Esophagus muscularis mucosa (tissue), 4 donors: ENCODE measurements at regions of chr10 and their contacts with region 1.

Region 1: DNA sequence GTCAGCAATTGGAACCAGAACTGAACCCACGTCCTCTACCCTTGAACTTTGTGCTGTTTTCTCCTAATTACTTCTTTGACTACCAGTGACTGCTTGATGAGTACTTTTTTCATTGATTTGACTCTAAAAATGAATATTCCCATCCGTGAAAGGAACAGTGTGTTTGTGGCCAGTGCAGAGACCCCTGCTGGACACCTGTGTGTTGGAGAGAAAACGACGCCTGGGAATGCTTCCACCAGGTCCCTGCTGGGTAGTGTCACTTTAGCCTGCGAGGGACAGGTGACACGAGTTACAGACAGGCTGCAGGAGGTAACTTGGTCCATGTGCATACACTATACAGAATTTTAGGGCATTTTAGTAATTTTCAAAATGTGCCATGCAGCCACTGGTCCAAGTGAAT is 6.8 kb upstream of the GJD4 start:
- DNase-seq: no peak
- H3K4me3 ChIP-seq: no peak overlapping the region
- H3K27ac ChIP-seq: no peak overlapping the region
- H3K4me1 ChIP-seq: no peaks in the 10 kb centered on the region
- H3K27me3 ChIP-seq: peaks cover 0 to 21% (median 0%) of the 10 kb centered on the region in 4 donors
- CTCF ChIP-seq: peak in 1 of 3 experiments; percentile 40
- EP300 ChIP-seq: no peak
- POLR2A ChIP-seq: no peak

Region 2: DNA sequence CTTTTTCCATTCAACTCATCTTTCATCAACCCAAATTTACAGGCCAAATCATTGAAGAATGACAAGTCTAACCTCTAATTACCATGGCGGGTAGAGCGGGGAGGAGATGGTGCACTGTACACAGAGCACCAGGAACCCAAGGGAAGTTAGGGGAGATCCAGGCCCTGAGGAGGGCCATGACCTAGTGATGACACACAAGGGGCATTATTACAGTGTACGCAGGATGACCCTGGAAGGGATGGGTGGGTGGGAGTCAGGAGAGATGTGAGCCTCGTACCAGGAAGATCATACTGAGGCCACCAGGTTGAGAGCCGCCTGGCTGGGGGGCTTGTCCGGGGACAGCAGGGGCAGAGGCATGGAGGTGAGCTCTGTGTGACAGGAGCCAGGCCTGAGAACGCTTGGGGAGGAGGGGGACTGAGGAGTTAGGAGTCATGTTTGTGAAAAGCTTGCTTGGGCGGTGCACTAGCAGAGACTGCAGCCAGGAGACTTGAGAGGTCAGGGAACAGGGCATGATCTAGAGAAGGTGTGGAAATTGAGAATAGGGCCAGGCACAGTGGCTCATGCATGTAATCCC is 351.5 kb before region 1 on chr10:
- intact Hi-C with region 1: loop called (anchors 10 kb)
- DNase-seq: no peak
- H3K4me3 ChIP-seq: no peak overlapping the region
- H3K27ac ChIP-seq: no peak overlapping the region
- H3K4me1 ChIP-seq: no peaks in the 10 kb centered on the region
- H3K27me3 ChIP-seq: no peaks in the 10 kb centered on the region
- CTCF ChIP-seq: no peak
- EP300 ChIP-seq: no peak
- POLR2A ChIP-seq: no peak